ENCODE measurements at regions of chr7 and their contacts with region 1.

Region 1: GRCh38 chr7:141975806-141976523 is 2.4 kb upstream of the TAS2R38 start:
- DNase-seq: peak; percentile 90
- H3K4me3 Mint-ChIP-seq: peak overlapping the region; percentile 64
- H3K27ac Mint-ChIP-seq: peak overlapping the region; percentile 43
- H3K4me1 Mint-ChIP-seq: peaks cover 10% of the 10 kb centered on the region
- H3K27me3 Mint-ChIP-seq: peaks cover 15% of the 10 kb centered on the region
- CTCF ChIP-seq: peak; percentile 91

Region 2: GRCh38 chr7:141945356-141945755 is 30.6 kb before region 1 on chr7:
- CTCF ChIA-PET with region 1: no interaction called
- intact Hi-C with region 1: no loop called
- DNase-seq: no peak
- H3K4me3 Mint-ChIP-seq: no peak overlapping the region
- H3K27ac Mint-ChIP-seq: no peak overlapping the region
- H3K4me1 Mint-ChIP-seq: no peaks in the 10 kb centered on the region
- H3K27me3 Mint-ChIP-seq: no peaks in the 10 kb centered on the region
- CTCF ChIP-seq: no peak

Region 3: DNA sequence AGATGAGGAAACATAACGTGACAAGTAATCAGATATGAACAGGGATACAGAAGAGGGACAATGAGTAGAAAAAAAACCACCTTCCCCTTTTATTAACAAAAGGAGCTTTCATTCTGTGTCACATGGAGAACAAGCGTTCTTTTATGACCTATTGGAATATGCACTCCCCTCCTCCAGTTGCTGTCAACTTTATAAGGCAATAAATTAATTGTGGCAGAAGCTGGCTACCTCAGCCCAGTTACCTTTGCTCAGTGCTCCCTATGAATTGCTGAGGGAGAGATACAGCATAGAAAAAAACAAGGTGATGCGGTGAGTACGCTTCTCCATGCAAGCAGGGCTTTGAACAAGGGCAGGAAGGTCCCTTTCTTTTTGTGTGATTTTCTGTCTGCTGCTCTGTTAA is 135.5 kb after region 1 on chr7 and contains the start of gene MGAM2:
- CTCF ChIA-PET with region 1: interaction called, 6 read pairs
- intact Hi-C with region 1: loop called (anchors 5 kb)
- DNase-seq: peak; percentile 55
- H3K4me3 Mint-ChIP-seq: peak within 1 kb of the TSS; percentile 91
- H3K27ac Mint-ChIP-seq: peak within 1 kb of the TSS; percentile 88
- H3K4me1 Mint-ChIP-seq: peaks cover 82% of the 10 kb centered on the region
- H3K27me3 Mint-ChIP-seq: no peaks in the 10 kb centered on the region
- CTCF ChIP-seq: no peak
- total RNA-seq, gene MGAM2: 69.5 and 124 TPM in 2 replicates

Region 4: DNA sequence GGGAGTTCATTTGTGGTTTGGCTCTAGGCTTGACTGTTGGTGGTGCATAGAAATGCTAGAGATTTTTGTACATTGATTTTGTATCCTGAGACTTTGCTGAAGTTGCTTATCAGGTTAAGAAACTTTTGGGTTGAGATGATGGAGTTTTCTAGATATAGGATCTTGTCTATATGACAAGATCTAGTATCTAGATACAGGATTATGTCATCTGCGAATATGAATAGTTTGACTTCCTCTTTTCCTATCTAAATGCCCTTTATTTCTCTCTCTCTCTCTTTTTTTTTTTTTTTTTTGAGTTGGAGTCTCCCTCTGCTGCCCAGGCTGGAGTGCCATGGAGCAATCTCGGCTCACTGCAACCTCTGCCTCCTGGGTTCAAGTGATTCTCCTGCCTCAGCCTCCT is 198.5 kb after region 1 on chr7:
- CTCF ChIA-PET with region 1: no interaction called
- intact Hi-C with region 1: loop called (anchors 5 kb)
- DNase-seq: no peak
- H3K4me3 Mint-ChIP-seq: no peak overlapping the region
- H3K27ac Mint-ChIP-seq: no peak overlapping the region
- H3K4me1 Mint-ChIP-seq: peaks cover 12% of the 10 kb centered on the region
- H3K27me3 Mint-ChIP-seq: no peaks in the 10 kb centered on the region
- CTCF ChIP-seq: no peak

Region 5: DNA sequence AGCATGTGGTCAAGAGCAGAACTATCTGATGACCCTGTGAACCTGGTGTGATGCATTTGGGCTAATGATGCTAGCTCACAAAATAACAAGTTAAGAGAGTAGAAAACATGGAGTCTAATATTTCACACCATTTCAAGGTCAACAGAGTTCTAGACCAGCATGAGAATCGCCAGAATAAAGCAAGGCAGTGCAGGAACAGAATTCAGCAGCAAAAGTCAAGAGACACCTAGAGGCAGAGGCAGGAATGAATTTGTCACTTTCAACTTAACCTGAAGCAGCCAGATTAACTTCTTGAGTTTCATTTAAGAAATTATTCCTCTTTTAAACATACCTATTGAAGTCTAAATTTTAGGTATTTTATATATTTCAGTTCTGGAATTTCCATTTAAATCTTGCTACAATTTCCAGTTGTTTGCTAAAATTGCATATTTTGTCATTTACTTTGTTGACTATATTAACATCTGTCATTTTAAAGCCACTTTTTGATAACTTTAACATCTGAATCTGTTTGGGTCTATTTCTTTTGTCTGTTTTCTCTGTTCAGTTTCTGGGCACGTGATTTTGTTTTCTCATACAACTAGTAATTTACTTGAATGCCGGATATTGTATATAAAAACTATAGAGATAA is 326.1 kb after region 1 on chr7:
- CTCF ChIA-PET with region 1: interaction called, 6 read pairs
- intact Hi-C with region 1: loop called (anchors 1 kb)
- DNase-seq: peak; percentile 25
- H3K4me3 Mint-ChIP-seq: no peak overlapping the region
- H3K27ac Mint-ChIP-seq: no peak overlapping the region
- H3K4me1 Mint-ChIP-seq: no peaks in the 10 kb centered on the region
- H3K27me3 Mint-ChIP-seq: peaks cover 83% of the 10 kb centered on the region
- CTCF ChIP-seq: peak; percentile 36

Measured in Calu3 (cell line).